Activated CD4-positive, alpha-beta T cell treated with anti-CD3 and anti-CD28 coated beads for 36 hours (primary cell): ENCODE measurements at regions of chr1 and their contacts with region 1.

Region 1: GRCh38 chr1:169711469-169712281 is at the start of gene SELL:
- DNase-seq: peak; percentile 86
- ATAC-seq: peak; percentile 77
- H3K4me3 Mint-ChIP-seq: peak within 1 kb of the TSS; percentile 83
- H3K27ac Mint-ChIP-seq: peak within 1 kb of the TSS; percentile 93
- H3K4me1 Mint-ChIP-seq: peaks cover 23% of the 10 kb centered on the region
- H3K27me3 Mint-ChIP-seq: peaks cover 4% of the 10 kb centered on the region
- total RNA-seq, gene SELL: 206 to 262 TPM

Region 2: DNA sequence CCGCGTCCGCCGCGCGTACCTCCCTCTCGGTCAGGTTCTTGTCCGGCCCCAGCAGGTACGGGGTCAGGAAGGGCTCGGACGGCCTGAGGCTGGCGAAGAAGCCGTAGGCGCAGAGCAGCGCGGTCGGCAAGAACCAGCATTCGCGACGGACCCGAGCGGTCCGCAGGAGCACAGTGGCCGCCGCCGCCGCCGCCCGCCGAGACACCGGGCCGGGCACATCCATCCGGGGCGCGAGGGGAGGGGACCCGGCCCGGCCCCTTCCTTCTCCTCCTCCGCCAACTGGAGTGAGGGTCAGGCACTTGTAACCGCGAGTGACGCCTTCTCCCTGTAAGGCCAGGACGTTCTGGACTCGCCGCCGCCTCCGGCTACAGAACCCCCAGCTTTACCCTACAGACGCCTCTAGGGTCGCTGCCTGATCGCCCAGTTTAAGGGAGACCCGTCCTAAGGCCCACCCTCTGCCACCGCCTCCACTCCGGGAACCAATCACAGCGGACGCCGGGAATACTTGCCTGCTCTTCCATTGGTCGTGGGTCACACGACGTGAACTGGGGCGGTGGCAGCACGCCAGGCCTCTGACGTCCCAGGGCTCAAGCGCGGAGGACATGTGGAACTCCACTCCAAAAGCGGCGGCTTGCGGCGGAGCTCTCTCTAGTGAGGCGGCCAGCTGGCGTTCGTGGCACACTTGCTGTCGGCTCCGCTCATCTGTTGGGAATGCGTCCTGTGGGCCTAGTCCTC is 226.0 kb before region 1 on chr1 and contains the start of gene SLC19A2:
- CTCF ChIA-PET with region 1: interaction called, 5 read pairs
- POLR2A ChIA-PET with region 1: no interaction called
- intact Hi-C with region 1: loop called (anchors 2 to 5 kb)
- DNase-seq: peak; percentile 96
- ATAC-seq: peak; percentile 99
- H3K4me3 Mint-ChIP-seq: peak within 1 kb of the TSS; percentile 93
- H3K27ac Mint-ChIP-seq: peak within 1 kb of the TSS; percentile 94
- H3K4me1 Mint-ChIP-seq: peaks cover 48% of the 10 kb centered on the region
- H3K27me3 Mint-ChIP-seq: peaks cover 1% of the 10 kb centered on the region
- total RNA-seq, gene SLC19A2: 4.0 to 4.4 TPM

Region 3: GRCh38 chr1:169577981-169578738 is 133.5 kb before region 1 on chr1:
- CTCF ChIA-PET with region 1: interaction called, 77 read pairs
- POLR2A ChIA-PET with region 1: no interaction called
- intact Hi-C with region 1: no loop called
- DNase-seq: no peak
- ATAC-seq: no peak
- H3K4me3 Mint-ChIP-seq: no peak overlapping the region
- H3K27ac Mint-ChIP-seq: no peak overlapping the region
- H3K4me1 Mint-ChIP-seq: peaks cover 19% of the 10 kb centered on the region
- H3K27me3 Mint-ChIP-seq: no peaks in the 10 kb centered on the region

Region 4: DNA sequence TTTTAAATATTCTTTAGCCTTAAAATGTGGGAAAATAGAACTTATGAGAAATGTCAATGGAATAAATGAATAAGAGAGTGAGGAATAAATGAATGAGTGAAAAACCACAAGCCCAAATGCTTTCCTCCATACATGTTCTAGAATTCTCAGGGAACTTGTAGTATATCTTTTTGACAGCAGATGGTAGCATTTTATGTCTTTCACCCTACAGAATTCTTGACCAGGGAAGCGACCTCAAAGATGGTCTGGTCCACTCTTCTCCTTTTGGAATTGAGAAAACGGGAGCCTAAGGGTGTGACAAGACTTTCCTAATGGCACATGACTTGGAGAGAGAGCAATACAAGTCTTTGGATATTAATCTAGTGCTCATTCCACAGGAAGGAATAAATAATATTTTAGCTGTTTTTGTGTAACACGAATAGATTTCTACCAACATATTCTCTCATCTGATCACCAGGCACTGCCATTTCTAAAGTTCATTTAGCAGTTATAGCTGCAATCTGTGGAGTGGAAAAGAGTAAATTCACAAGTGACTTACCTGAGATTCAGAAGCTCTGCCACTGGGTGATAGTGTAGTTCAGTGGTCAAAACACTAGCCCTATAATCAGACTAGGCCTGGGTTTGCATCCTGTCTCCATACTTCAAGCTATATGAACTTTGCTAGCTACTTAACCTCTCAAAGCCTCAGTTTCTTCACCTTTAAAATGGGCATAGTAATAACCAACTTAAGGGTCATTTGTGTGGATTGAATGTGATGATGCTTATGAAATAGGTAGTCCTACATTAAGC is 110.4 kb before region 1 on chr1:
- CTCF ChIA-PET with region 1: interaction called, 119 read pairs
- POLR2A ChIA-PET with region 1: no interaction called
- intact Hi-C with region 1: loop called (anchors 1 kb)
- DNase-seq: no peak
- ATAC-seq: peak; percentile 38
- H3K4me3 Mint-ChIP-seq: no peak overlapping the region
- H3K27ac Mint-ChIP-seq: peak overlapping the region; percentile 72
- H3K4me1 Mint-ChIP-seq: peaks cover 56% of the 10 kb centered on the region
- H3K27me3 Mint-ChIP-seq: no peaks in the 10 kb centered on the region

Region 5: DNA sequence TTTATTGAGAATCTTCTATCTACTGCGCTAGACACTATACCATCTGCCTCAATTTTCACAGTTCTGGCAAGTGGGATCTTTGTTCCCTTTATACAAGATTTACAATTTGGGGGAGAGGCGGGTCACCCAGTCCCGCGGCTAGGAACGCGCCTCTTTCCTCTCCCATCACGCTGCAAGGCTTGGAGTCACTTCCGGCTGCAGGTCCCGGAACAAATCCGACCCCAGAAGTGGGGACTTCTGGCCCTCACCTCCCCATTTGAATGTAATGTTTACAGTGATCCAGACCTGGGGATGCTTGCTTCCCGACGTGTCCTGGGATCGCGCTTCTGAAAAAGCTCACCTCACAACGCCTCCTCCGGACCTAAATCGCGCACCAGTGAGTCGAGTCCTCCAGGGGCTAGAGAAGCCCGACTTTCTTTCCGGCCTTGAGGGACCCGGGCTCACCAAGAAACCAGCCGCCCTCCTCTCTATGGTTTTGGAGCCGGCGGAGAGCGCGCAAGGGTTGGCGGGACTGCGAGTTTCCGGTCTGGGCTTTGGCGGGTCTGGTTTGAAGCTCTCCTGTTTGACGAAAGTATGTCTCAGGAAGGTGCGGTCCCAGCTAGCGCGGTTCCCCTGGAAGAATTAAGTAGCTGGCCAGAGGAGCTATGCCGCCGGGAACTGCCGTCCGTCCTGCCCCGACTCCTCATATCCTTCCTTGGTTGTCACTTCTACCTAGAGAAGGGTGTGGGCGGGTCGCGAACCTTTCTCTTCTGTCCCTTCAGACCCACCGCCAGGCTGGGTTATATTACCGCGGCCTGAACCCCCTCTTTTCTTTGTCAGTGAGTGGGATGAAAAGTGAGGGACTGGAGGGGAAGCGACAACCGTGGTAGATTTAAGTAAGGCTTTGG is 83.1 kb after region 1 on chr1 and contains the start of gene METTL18:
- CTCF ChIA-PET with region 1: interaction called, 6 read pairs
- POLR2A ChIA-PET with region 1: interaction called, 3 read pairs
- intact Hi-C with region 1: loop called (anchors 1 to 5 kb)
- DNase-seq: peak; percentile 96
- ATAC-seq: peak; percentile 98
- H3K4me3 Mint-ChIP-seq: peak within 1 kb of the TSS; percentile 96
- H3K27ac Mint-ChIP-seq: peak within 1 kb of the TSS; percentile 98
- H3K4me1 Mint-ChIP-seq: peaks cover 46% of the 10 kb centered on the region
- H3K27me3 Mint-ChIP-seq: no peaks in the 10 kb centered on the region
- total RNA-seq, gene METTL18: 11.6 to 13.3 TPM